WTC11 (cell line): ENCODE measurements at regions of chr10 and their contacts with region 1.

Region 1: DNA sequence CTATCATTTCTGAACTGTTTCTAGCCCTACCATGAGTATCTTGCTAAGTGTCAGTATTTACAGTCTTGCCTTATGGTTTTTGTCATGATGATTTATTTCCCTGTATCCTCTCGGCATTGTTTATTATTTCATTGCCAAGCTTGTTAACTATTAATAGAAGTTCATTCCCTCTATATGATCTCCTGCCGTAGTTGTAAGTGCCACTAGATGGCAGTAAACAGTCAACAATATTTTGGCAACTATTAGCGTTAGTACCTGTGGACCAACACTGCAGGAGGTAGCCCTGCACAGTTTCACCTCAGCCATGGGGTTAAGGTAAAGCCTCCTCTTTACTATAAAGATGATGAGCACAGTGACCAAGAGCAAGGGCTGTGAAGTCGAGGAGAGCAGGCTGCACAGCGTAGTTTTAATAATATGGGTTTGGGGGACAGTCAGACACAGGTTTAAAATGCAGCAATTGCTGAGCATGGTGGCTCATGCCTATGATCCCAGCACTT is 26.1 kb upstream of the CCNJ start:
- DNase-seq: peak; percentile 29
- ATAC-seq: peak; percentile 94
- H3K4me3 Mint-ChIP-seq: no peak overlapping the region
- H3K27ac Mint-ChIP-seq: no peak overlapping the region
- H3K4me1 Mint-ChIP-seq: no peaks in the 10 kb centered on the region
- H3K27me3 Mint-ChIP-seq: no peaks in the 10 kb centered on the region
- CTCF ChIP-seq: peak; percentile 53; the same call in 1 of the 2 replicates

Region 2: GRCh38 chr10:96222441-96222840 is 205.2 kb after region 1 on chr10:
- CTCF ChIA-PET with region 1: interaction called, 10 read pairs
- POLR2A ChIA-PET with region 1: no interaction called
- DNase-seq: peak; percentile 45
- ATAC-seq: peak; percentile 86
- H3K4me3 Mint-ChIP-seq: no peak overlapping the region
- H3K27ac Mint-ChIP-seq: peak overlapping the region; percentile 11; the same call in 1 of the 2 replicates
- H3K4me1 Mint-ChIP-seq: peaks cover 41% of the 10 kb centered on the region
- H3K27me3 Mint-ChIP-seq: no peaks in the 10 kb centered on the region; the same call in none of the 2 replicates
- CTCF ChIP-seq: no peak

Region 3: DNA sequence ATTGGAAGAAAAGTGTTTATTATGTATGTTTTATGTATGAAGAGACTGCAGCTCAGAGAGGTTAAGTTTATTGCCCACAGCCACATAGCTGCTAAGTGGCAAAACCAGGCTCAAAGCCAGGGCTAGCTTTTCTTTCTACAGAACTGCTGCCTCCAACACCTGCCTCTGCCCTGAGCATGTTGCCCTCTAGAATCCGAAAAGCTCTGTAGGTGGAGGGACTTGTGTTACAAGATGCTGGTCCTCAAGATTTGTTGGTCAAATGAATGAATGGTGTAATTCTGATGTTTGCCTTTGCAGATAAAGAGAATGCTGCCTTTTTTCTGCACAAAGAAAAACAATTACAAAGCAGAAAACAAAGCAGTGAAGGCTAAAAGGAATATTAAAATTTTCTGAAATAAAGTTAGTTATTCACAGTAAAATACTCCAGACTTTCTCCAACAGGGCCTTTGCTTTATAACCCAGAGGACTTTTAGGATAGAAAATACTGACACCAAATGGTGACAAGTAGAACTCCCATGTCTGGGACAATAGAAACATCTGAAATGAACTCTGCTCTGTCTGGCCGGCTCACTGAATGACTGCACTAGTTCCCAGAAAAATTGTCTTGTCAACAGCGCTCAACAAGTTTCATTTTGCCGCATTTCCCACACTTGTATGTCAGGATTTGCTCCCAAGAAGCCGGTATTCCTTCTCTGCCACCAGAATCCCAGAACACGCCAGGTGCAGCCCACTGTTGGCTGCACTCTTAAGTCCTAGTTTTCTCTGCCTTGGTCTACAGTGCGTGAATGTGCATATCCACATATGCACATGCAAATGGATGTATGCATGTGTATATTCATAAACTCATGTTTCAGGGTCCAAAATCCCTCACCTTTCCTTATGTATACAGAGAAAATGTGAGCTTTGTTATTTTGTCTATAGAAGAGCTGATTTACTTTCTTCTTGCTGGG is 276.0 kb after region 1 on chr10:
- CTCF ChIA-PET with region 1: interaction called, 11 read pairs
- POLR2A ChIA-PET with region 1: no interaction called
- DNase-seq: no peak
- ATAC-seq: peak; percentile 98
- H3K4me3 Mint-ChIP-seq: no peak overlapping the region
- H3K27ac Mint-ChIP-seq: no peak overlapping the region
- H3K4me1 Mint-ChIP-seq: peaks cover 13% of the 10 kb centered on the region
- H3K27me3 Mint-ChIP-seq: no peaks in the 10 kb centered on the region
- CTCF ChIP-seq: no peak

Region 4: DNA sequence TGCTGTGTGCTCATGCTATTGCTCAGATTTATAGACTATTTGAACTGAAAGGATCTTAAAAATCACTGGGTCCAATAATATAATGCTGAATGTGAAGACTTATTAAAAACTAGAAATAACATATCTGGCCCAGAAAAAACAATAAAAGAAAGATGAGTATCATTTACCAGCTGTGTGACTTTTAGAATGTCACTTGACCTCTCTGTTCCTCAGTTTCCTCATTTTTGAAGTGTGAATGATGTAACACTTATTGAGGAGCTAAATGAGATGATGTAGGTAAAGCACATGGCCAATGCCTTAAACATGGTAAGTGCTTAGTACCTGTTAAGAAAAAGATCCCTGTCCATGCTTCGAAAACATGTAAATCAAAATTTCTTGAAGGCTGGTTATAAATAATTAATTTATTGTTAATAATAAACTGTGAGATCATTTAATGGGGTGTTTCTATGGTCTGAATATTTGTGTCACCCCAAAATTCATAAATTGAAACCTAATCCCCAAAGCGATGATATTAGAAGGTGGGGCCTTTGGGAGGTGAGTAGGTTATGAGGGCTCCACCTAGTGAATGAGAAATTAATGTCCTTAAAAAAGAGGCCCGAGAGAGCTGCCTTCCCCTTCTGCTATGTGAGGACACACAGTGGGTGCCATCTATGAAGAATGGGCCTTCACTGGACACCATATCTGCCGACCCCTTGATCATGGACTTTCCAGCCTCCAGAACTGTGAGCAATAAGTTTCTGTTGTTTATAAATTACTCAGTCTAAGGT is 300.0 kb after region 1 on chr10:
- CTCF ChIA-PET with region 1: interaction called, 11 read pairs
- POLR2A ChIA-PET with region 1: no interaction called
- DNase-seq: no peak
- ATAC-seq: no peak
- H3K4me3 Mint-ChIP-seq: no peak overlapping the region
- H3K27ac Mint-ChIP-seq: no peak overlapping the region
- H3K4me1 Mint-ChIP-seq: peaks cover 51% of the 10 kb centered on the region
- H3K27me3 Mint-ChIP-seq: no peaks in the 10 kb centered on the region
- CTCF ChIP-seq: no peak

Region 5: DNA sequence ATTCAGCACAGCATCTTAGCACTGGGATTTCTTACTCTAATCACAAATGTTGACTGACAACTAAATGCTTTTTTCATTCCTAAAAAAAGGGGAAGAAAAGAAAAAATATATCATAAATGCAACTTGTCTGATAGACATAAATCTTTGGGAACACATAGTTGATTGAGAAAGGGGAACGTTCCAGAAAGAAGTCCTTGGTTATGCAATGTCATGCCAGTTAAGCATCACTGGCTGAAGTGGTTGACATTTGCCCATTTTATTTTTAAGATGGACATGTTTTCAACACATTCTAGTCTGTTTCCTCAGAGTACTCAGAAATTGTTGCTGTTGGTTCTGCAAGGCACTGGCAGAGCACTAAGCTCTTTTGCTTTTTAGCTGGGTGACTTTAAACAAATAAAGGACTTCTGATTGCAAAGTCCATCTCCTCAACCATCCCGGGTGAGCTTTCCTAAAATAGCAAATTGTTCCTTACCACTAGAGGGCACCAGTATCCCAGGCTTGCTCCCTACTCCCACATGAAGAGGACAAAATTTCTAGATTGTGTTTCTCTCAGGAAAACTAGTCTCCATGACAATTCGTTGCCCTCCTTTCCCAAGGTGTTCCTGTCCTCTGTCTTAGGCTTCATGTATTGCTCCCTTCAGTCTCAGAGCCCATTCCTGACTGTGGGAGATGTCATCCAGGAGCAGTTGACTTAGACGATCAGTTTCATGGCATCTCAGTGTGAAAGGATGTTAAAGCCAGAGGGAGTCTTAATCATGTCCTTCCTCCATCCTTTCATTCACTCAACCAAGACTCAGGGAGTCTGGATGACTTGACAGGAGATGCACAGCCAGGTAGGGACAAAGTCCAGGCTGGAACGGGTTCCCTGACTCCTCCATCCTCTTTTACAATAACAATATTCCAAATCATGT is 317.6 kb after region 1 on chr10:
- CTCF ChIA-PET with region 1: interaction called, 11 read pairs
- POLR2A ChIA-PET with region 1: no interaction called
- DNase-seq: no peak
- ATAC-seq: peak; percentile 79
- H3K4me3 Mint-ChIP-seq: no peak overlapping the region
- H3K27ac Mint-ChIP-seq: no peak overlapping the region
- H3K4me1 Mint-ChIP-seq: peaks cover 26% of the 10 kb centered on the region
- H3K27me3 Mint-ChIP-seq: peaks cover 4% of the 10 kb centered on the region
- CTCF ChIP-seq: peak; percentile 75

Region 6: DNA sequence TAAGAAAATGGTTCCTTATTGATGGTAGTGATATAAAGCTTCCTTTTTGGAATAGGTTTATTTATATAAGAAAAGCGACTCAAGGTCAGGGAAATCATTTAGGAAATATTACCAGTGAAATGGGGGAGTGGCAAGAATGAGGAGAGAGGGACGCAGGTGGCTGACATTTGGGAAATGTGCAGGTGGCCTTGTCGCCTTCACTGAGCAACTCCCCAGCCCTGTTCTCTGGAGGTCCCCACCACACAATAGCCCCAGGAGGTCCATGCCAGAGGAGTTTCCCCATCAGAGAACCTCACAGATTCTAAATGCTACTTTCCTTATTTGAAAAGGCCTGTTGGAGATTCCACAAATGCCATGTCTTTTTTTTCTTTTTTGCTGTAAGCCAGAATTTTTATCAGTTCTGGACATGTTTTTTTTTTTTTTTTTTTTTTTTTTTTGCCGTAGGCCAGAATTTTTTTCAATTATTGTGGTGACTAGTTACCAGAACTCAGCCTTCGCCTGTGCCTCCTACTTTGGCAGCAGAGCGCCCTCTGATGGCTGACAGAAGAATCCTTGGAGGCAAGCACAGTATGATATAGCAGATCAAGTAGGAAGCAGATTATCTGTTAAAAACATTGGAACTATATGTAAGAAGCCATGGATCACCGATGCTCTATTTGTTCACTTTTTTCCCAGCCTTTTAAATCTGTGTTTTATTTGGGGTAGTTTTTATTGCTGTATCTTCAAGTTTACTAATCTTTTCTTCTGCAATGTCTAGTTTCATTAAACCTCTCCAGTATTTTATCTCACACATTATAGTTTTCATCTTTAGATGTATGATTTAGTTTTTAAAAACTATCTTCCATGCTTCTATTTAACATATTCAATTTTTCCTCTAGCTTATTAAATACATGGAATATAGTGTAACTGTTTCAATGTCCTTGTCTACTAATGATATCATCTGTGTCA is 323.0 kb after region 1 on chr10:
- CTCF ChIA-PET with region 1: interaction called, 15 read pairs
- POLR2A ChIA-PET with region 1: no interaction called
- DNase-seq: peak; percentile 79
- ATAC-seq: peak; percentile 72
- H3K4me3 Mint-ChIP-seq: no peak overlapping the region
- H3K27ac Mint-ChIP-seq: no peak overlapping the region
- H3K4me1 Mint-ChIP-seq: peaks cover 59% of the 10 kb centered on the region
- H3K27me3 Mint-ChIP-seq: peaks cover 24% of the 10 kb centered on the region
- CTCF ChIP-seq: peak; percentile 71